ENCODE measurements at regions of chr1 and their contacts with region 1.

Region 1: GRCh38 chr1:58699011-58699762 is 675 bp downstream of the MYSM1 start:
- DNase-seq: no peak
- ATAC-seq: peak; percentile 4
- H3K4me3 ChIP-seq: peak overlapping the region; percentile 80
- H3K4me3 Mint-ChIP-seq: peak overlapping the region; percentile 92 to 100 (median 98)
- H3K27ac ChIP-seq: peak overlapping the region; percentile 88
- H3K27ac Mint-ChIP-seq: peak overlapping the region; percentile 95 to 100 (median 98)
- H3K4me1 ChIP-seq: peaks cover 13 to 23% of the 10 kb centered on the region in 2 donors
- H3K4me1 Mint-ChIP-seq: peaks cover 4 to 22% (median 13%) of the 10 kb centered on the region in 7 donors
- H3K27me3 ChIP-seq: no peaks in the 10 kb centered on the region
- H3K27me3 Mint-ChIP-seq: peaks cover 0 to 3% (median 0%) of the 10 kb centered on the region in 5 donors

Region 2: DNA sequence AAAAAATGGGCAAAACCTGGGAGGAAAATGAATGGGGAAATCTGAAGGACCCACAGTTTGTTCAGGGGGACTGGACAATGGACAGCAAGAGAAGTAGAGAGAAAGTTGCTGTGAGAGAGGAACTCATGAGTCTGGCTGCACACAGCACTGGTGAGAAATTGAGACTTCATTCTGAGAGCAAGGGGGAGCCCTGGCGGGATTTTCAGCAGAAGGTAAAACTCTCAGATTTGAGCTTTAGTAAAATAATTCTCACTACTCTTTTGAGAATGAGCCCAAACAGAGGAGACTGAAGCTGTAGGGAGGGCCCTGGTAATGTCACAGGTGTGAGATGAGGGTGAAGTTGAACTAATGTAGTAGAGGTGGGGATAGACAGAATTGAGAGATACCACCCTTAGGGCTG is 591.2 kb before region 1 on chr1:
- CTCF ChIA-PET with region 1: no interaction called
- POLR2A ChIA-PET with region 1: no interaction called
- intact Hi-C with region 1: no loop called
- DNase-seq: no peak
- ATAC-seq: no peak
- H3K4me3 ChIP-seq: no peak overlapping the region
- H3K4me3 Mint-ChIP-seq: no peak overlapping the region
- H3K27ac ChIP-seq: no peak overlapping the region
- H3K27ac Mint-ChIP-seq: no peak overlapping the region
- H3K4me1 ChIP-seq: no peaks in the 10 kb centered on the region
- H3K4me1 Mint-ChIP-seq: peaks cover 0 to 7% (median 0%) of the 10 kb centered on the region in 7 donors
- H3K27me3 ChIP-seq: no peaks in the 10 kb centered on the region
- H3K27me3 Mint-ChIP-seq: peaks cover 0 to 17% (median 7%) of the 10 kb centered on the region in 5 donors

Region 3: DNA sequence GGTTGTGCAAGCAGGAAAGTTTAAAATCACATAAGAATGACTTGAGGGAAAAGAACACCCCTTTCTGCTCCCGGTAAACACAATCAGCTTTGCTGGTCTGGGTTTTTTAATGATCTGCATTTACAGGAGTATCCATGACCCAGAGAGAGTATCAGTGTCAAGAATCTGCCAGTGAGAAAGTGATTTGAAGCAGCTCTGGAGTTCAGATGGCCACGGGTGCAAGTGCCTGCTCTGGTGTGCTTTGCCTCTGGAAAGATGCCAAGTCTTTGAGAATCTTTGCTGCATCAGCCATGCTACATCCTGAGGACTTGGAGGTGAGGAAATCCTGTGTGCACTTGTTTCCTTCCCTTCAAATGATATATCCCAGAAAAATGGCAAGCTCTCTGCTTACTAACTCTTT is 19.2 kb after region 1 on chr1:
- CTCF ChIA-PET with region 1: no interaction called
- POLR2A ChIA-PET with region 1: interaction called, 3 read pairs
- intact Hi-C with region 1: loop called in 1 of 2 experiments (anchors 2 kb)
- DNase-seq: peak in 3 of 9 donors; percentile 13 to 24 (median 15)
- ATAC-seq: peak; percentile 32
- H3K4me3 ChIP-seq: no peak overlapping the region
- H3K4me3 Mint-ChIP-seq: peak overlapping the region in 9 of 10 donors; percentile 2 to 67 (median 46)
- H3K27ac ChIP-seq: no peak overlapping the region
- H3K27ac Mint-ChIP-seq: peak overlapping the region; percentile 3 to 71 (median 36)
- H3K4me1 ChIP-seq: peaks cover 11 to 25% of the 10 kb centered on the region in 2 donors
- H3K4me1 Mint-ChIP-seq: peaks cover 10 to 30% (median 18%) of the 10 kb centered on the region in 7 donors
- H3K27me3 ChIP-seq: no peaks in the 10 kb centered on the region
- H3K27me3 Mint-ChIP-seq: peaks cover 0 to 7% (median 0%) of the 10 kb centered on the region in 5 donors

Region 4: DNA sequence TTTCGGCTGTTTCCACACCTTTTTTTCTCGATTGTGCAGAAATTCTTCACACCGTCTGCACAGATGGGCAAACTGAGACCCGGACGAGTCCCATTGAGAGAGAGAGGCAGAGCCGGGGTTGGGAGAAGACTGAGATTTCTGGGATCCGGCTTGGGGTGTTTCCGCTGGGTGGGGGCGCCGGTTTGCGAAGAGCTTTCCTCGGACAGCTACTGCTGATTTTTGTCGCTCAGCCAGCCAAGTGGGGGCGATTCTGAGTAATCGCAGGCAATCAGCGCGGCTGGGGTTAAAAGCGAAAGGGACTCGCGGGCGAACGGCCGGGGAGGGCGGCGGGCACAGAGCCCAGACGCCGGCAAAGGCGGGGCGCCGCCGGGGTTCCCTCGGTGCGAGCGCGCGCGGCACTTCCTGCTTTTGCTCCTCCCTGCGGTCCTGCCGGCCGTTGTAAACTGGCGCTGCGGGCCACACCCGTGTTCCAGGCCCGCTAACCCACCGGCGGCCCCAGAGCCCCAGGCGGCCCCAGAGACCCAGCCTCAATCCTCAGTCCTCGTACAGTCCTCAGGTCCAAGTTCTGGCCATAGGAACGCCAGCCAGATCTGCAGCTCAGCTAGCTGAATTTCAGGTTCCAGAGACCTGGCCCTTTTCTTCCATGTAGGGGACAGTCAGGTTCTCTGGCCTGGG is 117.0 kb after region 1 on chr1:
- CTCF ChIA-PET with region 1: no interaction called
- POLR2A ChIA-PET with region 1: no interaction called
- intact Hi-C with region 1: loop called in 1 of 2 experiments (anchors 1 kb)
- DNase-seq: peak; percentile 66 to 84 (median 71)
- ATAC-seq: peak; percentile 88
- H3K4me3 ChIP-seq: peak overlapping the region; percentile 89
- H3K4me3 Mint-ChIP-seq: peak overlapping the region; percentile 88 to 94 (median 92)
- H3K27ac ChIP-seq: peak overlapping the region; percentile 77
- H3K27ac Mint-ChIP-seq: peak overlapping the region; percentile 77 to 95 (median 90)
- H3K4me1 ChIP-seq: peaks cover 27 to 34% of the 10 kb centered on the region in 2 donors
- H3K4me1 Mint-ChIP-seq: peaks cover 19 to 49% (median 41%) of the 10 kb centered on the region in 7 donors
- H3K27me3 ChIP-seq: no peaks in the 10 kb centered on the region
- H3K27me3 Mint-ChIP-seq: peaks cover 0 to 5% (median 0%) of the 10 kb centered on the region in 5 donors

Region 5: DNA sequence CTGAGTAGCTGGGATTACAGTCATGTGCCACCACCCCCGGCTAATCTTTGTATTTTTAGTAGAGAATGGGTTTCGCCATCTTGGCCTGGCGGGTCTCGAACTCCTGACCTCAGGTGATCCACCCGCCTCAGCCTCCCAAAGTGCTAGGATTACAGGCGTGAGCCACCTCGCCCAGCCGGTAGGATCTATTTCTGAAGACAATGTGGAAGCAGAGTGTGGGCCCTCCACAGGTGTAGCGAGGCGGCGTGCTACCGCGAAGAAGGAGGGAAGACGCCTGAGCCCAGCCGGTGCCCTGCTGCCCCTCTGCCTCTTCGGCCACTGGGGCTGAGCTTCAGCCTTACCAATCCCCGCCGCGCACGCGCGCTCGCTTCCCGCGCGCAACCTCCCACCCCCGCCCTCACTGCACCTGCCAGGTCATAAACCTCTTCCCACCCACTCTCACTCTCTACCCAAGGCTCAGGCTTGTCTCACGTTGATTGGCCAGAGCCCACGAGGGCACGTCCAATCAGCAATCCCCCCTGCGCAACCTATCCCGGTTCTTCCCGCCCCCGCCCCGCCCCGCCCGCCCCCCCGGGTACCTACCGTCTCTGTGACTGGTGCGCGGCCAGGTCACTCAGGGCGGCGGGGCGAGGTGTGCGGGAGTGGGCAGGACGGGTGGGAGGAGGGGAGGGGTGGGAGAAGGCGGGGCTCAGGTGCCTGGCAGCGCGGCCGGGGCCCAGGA is 1115.2 kb after region 1 on chr1:
- CTCF ChIA-PET with region 1: no interaction called
- POLR2A ChIA-PET with region 1: interaction called, 3 read pairs
- intact Hi-C with region 1: loop called (anchors 1 kb)
- DNase-seq: peak; percentile 65 to 95 (median 90)
- ATAC-seq: peak; percentile 95
- H3K4me3 ChIP-seq: peak overlapping the region; percentile 75
- H3K4me3 Mint-ChIP-seq: peak overlapping the region in 3 of 10 donors; percentile 90 to 92 (median 91)
- H3K27ac ChIP-seq: peak overlapping the region; percentile 91
- H3K27ac Mint-ChIP-seq: peak overlapping the region in 5 of 9 donors; percentile 72 to 95 (median 88)
- H3K4me1 ChIP-seq: peaks cover 0 to 23% of the 10 kb centered on the region in 2 donors
- H3K4me1 Mint-ChIP-seq: peaks cover under 1 to 8% (median 6%) of the 10 kb centered on the region in 7 donors
- H3K27me3 ChIP-seq: no peaks in the 10 kb centered on the region
- H3K27me3 Mint-ChIP-seq: peaks cover 6 to 25% (median 19%) of the 10 kb centered on the region in 5 donors